ENCODE measurements at regions of chr15 and their contacts with region 1.

Region 1: GRCh38 chr15:101121511-101122090 is 130.2 kb downstream of the CHSY1 start:
- DNase-seq: peak; percentile 91
- H3K4me3 ChIP-seq: no peak overlapping the region; a peak in 1 of 4 replicates
- H3K27ac ChIP-seq: peak overlapping the region; percentile 28 to 98; a peak in 3 of 4 replicates
- H3K4me1 ChIP-seq: peaks cover 10 to 37% of the 10 kb centered on the region in 2 experiments
- H3K27me3 ChIP-seq: no peaks in the 10 kb centered on the region
- CTCF ChIP-seq: peak; percentile 40; the same call in 1 of the 2 replicates
- EP300 ChIP-seq: peak in 1 of 2 experiments; percentile 67; a peak in 2 of 4 replicates
- RAD21 ChIP-seq: peak; percentile 73

Region 2: DNA sequence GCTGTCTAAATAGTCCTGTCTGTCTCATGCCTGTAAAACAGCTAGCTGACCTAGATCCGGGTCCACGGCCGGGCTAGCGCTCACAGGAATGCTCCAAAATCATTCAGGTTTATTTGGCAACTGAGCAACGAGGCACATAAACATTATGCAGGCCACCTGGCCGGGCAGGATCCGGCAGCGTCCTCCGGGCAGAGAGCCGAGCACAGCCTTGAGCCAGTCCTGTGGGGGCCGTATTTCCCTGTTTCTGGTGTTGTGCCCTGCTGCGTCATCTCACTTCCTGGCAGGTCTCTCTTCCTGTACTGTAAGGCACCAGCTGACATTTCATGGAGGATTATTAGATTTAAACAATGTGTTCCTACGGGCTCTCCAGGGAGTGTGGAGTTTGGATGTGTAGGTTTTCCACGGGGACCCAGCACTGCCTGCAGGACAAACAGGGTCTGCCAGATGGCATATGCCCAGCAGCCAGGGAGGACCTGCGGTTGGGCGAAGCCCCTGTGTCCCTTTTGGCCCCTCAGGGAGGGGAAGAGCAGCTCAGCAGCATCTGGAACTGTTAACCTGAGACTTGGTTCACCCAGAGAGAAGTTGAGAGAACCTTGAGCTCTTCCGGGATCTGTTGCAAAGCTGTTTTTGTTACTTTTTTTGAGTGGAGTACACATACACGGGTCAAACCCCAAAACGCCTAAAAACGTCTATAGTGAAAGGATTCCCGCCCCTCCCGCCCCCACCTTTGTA is 219.0 kb before region 1 on chr15:
- CTCF ChIA-PET with region 1: no interaction called
- POLR2A ChIA-PET with region 1: no interaction called
- DNase-seq: peak; percentile 87
- H3K4me3 ChIP-seq: peak overlapping the region; percentile 26 to 33; a peak in 3 of 4 replicates
- H3K27ac ChIP-seq: peak overlapping the region; percentile 60 to 98
- H3K4me1 ChIP-seq: peaks cover 12 to 44% of the 10 kb centered on the region in 2 experiments
- H3K27me3 ChIP-seq: no peaks in the 10 kb centered on the region
- CTCF ChIP-seq: no peak
- EP300 ChIP-seq: peak in 1 of 2 experiments; percentile 75; a peak in 2 of 4 replicates
- RAD21 ChIP-seq: peak; percentile 36

Region 3: DNA sequence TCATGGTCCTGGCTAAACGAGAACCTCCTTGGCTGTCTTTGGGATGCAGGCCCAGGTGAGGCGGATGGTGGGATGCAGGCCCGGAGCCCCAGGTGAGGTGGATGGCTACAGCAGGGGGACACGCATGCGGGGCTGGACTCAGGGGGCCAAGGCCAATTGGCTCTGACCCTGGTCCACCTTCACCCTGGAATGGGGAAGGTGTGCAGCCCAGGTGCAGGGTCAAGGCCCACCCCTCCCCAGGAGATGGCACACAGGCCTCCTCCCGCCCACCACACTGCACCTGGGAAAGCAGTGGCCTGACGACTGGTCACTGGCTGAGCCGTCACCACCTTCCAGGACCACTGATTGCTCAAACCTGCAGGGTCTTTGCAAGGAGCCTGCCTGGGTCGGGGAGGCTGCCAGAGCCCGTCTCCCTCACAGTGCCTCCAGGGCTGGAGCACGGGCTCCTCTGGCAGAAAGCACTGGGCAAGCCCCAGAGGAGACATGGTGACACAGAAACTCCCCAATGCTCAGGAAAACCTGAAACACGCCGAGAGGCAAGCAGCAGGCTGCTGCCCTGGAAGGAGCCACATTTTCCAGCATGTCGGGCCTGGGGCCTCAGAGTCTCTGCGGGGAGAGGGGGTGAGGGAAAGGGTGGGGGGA is 42.8 kb before region 1 on chr15:
- CTCF ChIA-PET with region 1: no interaction called
- POLR2A ChIA-PET with region 1: no interaction called
- DNase-seq: no peak
- H3K4me3 ChIP-seq: no peak overlapping the region
- H3K27ac ChIP-seq: no peak overlapping the region
- H3K4me1 ChIP-seq: no peaks in the 10 kb centered on the region; a peak in 1 of 4 replicates
- H3K27me3 ChIP-seq: no peaks in the 10 kb centered on the region
- CTCF ChIP-seq: no peak
- EP300 ChIP-seq: no peak
- RAD21 ChIP-seq: no peak

Region 4: DNA sequence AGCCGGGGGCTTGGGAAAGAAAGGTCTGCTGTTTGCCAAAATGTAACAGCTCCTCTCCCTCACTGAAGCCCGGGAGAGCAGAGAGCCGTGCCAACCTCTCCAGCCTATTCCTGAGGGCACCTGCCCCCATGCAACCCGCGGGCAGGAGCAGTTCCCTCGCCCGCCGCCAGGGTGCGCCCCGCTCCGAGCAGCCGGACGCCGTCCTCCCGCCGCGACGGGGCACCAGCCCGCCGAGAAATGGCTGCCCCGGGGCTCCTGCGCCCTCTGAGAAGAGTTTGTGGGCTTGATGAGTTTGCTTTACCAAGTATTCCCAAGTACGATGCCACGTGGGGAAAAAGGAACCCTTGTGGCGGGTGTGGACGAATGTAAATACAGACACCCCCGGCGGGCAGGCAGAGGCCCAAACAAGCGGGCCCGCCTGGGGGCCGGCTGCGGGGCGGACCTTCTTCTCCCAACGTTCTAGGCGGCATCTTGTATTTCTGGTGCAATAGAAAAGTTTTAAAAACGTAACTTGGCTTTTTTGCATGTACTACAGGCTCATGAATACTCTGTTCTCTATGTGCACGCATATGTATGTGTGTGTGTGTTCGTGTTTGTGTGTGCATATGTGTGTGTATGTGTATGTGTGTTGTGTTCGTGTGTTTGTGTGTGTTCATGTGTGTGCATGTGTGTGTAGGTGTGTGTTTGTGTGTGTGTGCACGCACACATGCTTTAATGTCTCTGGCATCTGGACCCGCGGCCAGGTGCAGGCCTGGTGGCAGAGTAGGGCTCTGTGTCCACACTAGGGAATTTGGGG is 32.6 kb before region 1 on chr15:
- CTCF ChIA-PET with region 1: interaction called, 11 read pairs
- POLR2A ChIA-PET with region 1: no interaction called
- DNase-seq: peak; percentile 93
- H3K4me3 ChIP-seq: peak overlapping the region in 1 of 2 experiments; percentile 41; a peak in 1 of 4 replicates
- H3K27ac ChIP-seq: no peak overlapping the region
- H3K4me1 ChIP-seq: peaks cover 0 to 26% of the 10 kb centered on the region in 2 experiments; a peak in 1 of 4 replicates
- H3K27me3 ChIP-seq: no peaks in the 10 kb centered on the region
- CTCF ChIP-seq: peak; percentile 91
- EP300 ChIP-seq: no peak
- RAD21 ChIP-seq: peak; percentile 84

Region 5: DNA sequence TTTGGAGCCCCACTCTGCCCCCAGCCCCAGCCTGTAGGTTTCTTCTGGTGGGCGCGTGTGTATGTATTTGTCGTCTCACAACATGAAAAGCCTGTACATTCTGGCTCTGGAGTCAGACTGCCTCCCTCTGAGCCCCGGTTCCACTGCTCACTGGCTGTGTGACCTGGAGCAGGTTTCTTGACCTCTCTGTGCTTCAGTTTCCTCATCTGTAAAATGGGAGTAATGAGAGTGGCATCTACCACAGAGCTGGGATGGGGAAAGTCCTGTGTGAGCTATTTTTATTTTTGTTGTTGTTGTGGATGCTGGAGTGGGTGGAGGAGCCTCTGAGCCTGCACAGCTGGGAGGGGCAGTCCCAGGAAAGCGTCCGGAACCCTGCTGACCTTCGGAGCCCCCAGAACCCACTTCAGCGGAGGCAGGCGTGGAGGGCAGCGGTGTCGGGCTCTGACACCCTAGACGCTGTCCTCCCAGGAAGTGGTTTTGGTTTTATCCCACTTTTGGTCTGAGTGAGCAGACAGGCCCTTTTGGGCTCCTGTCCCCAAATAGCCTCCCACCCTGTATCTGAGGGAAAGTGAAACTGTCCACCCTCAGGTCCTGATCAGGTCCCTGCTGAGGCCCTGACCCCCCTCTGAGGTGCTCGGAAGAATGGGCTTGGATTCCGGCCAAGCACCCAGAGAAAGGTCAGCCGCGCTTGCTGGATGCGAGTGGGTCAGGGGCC is 26.7 kb after region 1 on chr15:
- CTCF ChIA-PET with region 1: interaction called, 10 read pairs
- POLR2A ChIA-PET with region 1: interaction called, 5 read pairs
- DNase-seq: no peak
- H3K4me3 ChIP-seq: no peak overlapping the region
- H3K27ac ChIP-seq: peak overlapping the region in 1 of 2 experiments; percentile 100; a peak in 2 of 4 replicates
- H3K4me1 ChIP-seq: peaks cover 0 to 53% of the 10 kb centered on the region in 2 experiments; a peak in 2 of 4 replicates
- H3K27me3 ChIP-seq: no peaks in the 10 kb centered on the region
- CTCF ChIP-seq: no peak
- EP300 ChIP-seq: no peak
- RAD21 ChIP-seq: no peak

Measured in SK-N-SH (cell line).